A673 (cell line): ENCODE measurements at regions of chr1 and their contacts with region 1.

Region 1: GRCh38 chr1:89820422-89821321 is at the start of gene LRRC8D:
- DNase-seq: peak; percentile 90
- H3K4me3 ChIP-seq: peak within 1 kb of the TSS; percentile 86
- H3K27ac ChIP-seq: peak within 1 kb of the TSS; percentile 89
- H3K4me1 ChIP-seq: peaks cover 39% of the 10 kb centered on the region
- H3K27me3 ChIP-seq: no peaks in the 10 kb centered on the region
- CTCF ChIP-seq: no peak
- total RNA-seq, gene LRRC8D: 59.4 and 67.5 TPM in 2 replicates

Region 2: GRCh38 chr1:88961647-88962275 is 858.9 kb before region 1 on chr1:
- CTCF ChIA-PET with region 1: no interaction called
- POLR2A ChIA-PET with region 1: interaction called, 11 read pairs
- intact Hi-C with region 1: no loop called
- DNase-seq: no peak
- H3K4me3 ChIP-seq: no peak overlapping the region
- H3K27ac ChIP-seq: no peak overlapping the region
- H3K4me1 ChIP-seq: no peaks in the 10 kb centered on the region
- H3K27me3 ChIP-seq: no peaks in the 10 kb centered on the region
- CTCF ChIP-seq: no peak